ENCODE measurements at regions of chr1 and their contacts with region 1.

Region 1: DNA sequence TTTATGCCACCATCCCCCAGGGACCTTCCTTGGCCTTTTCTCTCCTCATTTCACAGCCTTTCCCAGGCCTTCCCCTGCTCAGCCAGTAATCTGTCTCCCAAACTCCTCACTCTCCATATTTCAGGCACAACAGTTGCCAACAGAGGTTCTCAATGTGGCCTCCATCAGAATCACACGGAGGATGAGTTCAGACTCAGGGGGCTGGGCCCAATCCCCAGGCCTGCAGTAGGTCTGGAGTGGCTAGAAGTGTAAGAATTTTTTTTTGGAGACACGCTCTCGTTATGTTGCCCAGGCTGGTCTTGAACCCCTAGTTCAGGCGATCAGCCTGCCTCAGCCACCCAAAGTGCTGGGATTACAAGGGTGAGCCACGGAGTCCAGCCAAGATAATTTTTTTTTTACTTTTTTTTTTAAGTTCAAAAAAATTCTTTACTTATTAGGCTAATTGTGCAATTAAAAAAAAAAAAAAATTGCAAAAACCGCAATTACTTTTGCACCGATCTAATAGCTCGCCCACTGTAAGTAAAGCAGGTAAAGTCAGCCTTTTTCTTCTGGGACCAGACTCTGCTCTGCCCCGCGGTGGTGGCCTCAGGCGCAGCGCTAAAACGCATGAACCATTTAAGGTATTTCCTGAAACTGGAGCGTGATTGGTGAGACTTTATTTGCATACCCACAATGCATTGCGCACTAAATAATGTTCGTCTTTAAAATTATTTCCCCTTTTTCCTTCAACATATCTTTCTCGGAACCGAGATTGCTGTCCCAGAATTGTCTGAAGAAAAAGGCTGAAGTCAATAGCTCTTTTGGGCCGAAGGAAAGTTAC is 18.7 kb downstream of the KIAA2013 start:
- DNase-seq: peak; percentile 84 to 96 (median 94)
- H3K4me3 ChIP-seq: peak overlapping the region; percentile 76
- H3K4me3 Mint-ChIP-seq: peak overlapping the region; percentile 89 to 100 (median 95)
- H3K27ac ChIP-seq: peak overlapping the region; percentile 100
- H3K27ac Mint-ChIP-seq: peak overlapping the region; percentile 99 to 100 (median 100)
- H3K4me1 ChIP-seq: peaks cover 23% of the 10 kb centered on the region
- H3K4me1 Mint-ChIP-seq: peaks cover 31 to 44% (median 40%) of the 10 kb centered on the region in 3 donors
- H3K27me3 ChIP-seq: no peaks in the 10 kb centered on the region
- H3K27me3 Mint-ChIP-seq: peaks cover 0 to 8% of the 10 kb centered on the region in 2 donors

Region 2: DNA sequence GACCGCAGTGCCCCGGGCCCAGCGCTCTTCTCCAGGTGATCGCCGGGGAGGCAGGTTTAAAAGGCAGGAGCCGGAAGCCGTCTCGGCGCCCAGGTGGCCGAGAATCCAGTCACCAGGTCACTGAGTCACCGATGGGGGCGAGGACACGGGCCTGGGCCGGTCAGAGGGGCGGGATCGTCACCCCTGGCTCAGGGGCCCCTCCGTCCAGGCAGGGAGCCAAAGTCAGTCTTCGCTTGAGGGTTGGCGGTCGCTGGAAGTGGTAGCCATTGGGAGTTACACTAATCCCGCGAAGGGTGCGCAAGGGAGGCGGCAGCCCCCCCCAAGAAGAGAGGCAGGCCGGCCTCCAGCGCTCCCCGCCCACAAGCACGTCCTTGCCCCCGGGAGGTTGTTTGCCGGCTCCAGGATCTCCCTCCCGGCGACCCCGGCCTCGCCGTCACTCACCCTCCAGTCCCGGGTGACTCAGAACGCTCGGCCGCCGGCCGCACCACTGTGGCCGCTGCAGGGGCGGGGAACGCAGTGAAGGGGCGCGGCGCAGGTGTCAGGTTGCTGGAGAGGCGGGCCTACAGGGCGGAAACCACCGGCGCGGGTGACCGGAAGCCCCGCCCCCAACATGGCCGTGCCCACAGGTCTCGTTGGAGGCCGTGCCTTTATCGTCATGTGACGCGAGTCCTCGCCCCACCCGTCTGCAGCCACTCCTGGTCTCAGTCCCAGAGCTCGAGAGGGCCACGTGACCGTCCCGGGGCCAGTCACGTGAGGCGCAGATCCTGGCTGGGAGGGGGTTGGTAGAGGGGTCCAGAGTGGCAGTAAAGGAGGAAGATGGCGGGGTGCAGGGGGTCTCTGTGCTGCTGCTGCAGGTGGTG is 101.8 kb before region 1 on chr1 and contains the starts of genes CLCN6 and MTHFR:
- CTCF ChIA-PET with region 1: interaction called, 6 read pairs
- POLR2A ChIA-PET with region 1: interaction called, 15 read pairs
- DNase-seq: peak; percentile 97 to 99 (median 98)
- H3K4me3 ChIP-seq: peak within 1 kb of the TSS; percentile 90
- H3K4me3 Mint-ChIP-seq: peak within 1 kb of the TSS; percentile 94 to 100 (median 99)
- H3K27ac ChIP-seq: peak within 1 kb of the TSS; percentile 95
- H3K27ac Mint-ChIP-seq: peak within 1 kb of the TSS; percentile 90 to 100 (median 98)
- H3K4me1 ChIP-seq: peaks cover 52% of the 10 kb centered on the region
- H3K4me1 Mint-ChIP-seq: peaks cover 55 to 74% (median 67%) of the 10 kb centered on the region in 3 donors
- H3K27me3 ChIP-seq: no peaks in the 10 kb centered on the region
- H3K27me3 Mint-ChIP-seq: no peaks in the 10 kb centered on the region
- total RNA-seq, gene CLCN6: 8.9 to 9.3 TPM
- total RNA-seq, gene MTHFR: 13.5 to 16.3 TPM

Region 3: DNA sequence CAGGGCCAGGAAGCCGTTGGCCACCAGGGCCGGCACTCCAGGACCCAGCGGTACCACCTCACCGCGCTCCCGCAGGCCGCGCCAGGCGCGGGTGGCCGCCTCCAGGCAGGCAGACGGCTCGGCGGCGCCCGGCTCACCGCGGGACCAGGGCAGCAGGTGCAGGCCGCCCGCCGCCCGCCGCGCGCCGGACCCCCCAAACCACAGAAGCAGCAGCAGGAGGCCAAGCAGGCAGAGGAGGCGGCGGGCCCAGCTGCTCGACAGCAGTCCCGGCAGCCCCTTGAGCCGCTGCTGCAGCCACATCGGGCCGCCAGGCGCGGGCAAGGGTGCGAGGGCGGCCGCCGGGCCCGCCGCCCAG is 18.4 kb after region 1 on chr1:
- CTCF ChIA-PET with region 1: interaction called, 6 read pairs
- POLR2A ChIA-PET with region 1: interaction called, 28 read pairs
- DNase-seq: peak in 3 of 5 donors; percentile 9 to 15 (median 13)
- H3K4me3 ChIP-seq: no peak overlapping the region
- H3K4me3 Mint-ChIP-seq: peak overlapping the region in 2 of 7 donors; percentile 87 to 96
- H3K27ac ChIP-seq: no peak overlapping the region
- H3K27ac Mint-ChIP-seq: peak overlapping the region in 1 of 8 donors; percentile 92
- H3K4me1 ChIP-seq: peaks cover 18% of the 10 kb centered on the region
- H3K4me1 Mint-ChIP-seq: peaks cover 28 to 39% (median 34%) of the 10 kb centered on the region in 3 donors
- H3K27me3 ChIP-seq: no peaks in the 10 kb centered on the region
- H3K27me3 Mint-ChIP-seq: peaks cover 0 to 2% of the 10 kb centered on the region in 2 donors

Region 4: DNA sequence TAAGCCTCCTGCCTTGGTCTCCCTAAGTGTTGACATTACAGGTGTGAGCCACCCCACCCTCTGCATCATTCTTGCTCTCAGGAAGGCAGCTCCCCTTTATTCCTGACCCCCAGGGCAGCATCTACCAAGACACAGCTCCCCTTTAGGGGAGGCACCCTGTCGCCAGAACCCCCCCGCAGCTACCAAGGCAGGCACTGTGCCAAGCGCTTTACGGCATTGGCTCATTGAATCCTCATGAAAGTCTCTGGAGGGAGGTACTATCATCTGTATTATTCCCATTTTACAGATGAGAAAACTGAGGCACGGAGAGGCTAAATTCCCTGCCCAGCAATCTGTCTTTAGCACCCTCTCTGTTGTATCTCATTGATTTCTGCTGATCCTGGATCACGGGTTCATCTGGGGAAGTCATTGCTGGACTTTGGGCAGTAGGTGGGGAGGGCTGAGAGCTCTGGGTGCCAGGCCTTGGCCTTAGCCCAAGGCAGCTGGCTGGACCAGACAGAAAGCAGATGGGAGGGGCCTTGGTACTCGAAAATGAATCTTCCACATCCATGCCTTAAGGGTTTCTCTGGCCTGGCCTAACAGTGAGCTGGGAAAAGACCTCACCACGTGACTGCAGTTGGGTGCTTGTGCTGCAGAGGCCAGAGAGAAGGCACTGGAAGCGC is 32.9 kb after region 1 on chr1:
- CTCF ChIA-PET with region 1: no interaction called
- POLR2A ChIA-PET with region 1: no interaction called
- DNase-seq: no peak
- H3K4me3 ChIP-seq: no peak overlapping the region
- H3K4me3 Mint-ChIP-seq: no peak overlapping the region
- H3K27ac ChIP-seq: no peak overlapping the region
- H3K27ac Mint-ChIP-seq: no peak overlapping the region
- H3K4me1 ChIP-seq: no peaks in the 10 kb centered on the region
- H3K4me1 Mint-ChIP-seq: no peaks in the 10 kb centered on the region
- H3K27me3 ChIP-seq: no peaks in the 10 kb centered on the region
- H3K27me3 Mint-ChIP-seq: no peaks in the 10 kb centered on the region

Region 5: GRCh38 chr1:11979851-11980675 is 72.6 kb after region 1 on chr1 and contains the start of gene MFN2:
- CTCF ChIA-PET with region 1: interaction called, 4 read pairs
- POLR2A ChIA-PET with region 1: interaction called, 40 read pairs
- DNase-seq: peak; percentile 87 to 95 (median 93)
- H3K4me3 ChIP-seq: peak within 1 kb of the TSS; percentile 89
- H3K4me3 Mint-ChIP-seq: peak within 1 kb of the TSS; percentile 88 to 97 (median 94)
- H3K27ac ChIP-seq: peak within 1 kb of the TSS; percentile 92
- H3K27ac Mint-ChIP-seq: peak within 1 kb of the TSS; percentile 92 to 98 (median 96)
- H3K4me1 ChIP-seq: peaks cover 33% of the 10 kb centered on the region
- H3K4me1 Mint-ChIP-seq: peaks cover 35 to 55% (median 47%) of the 10 kb centered on the region in 3 donors
- H3K27me3 ChIP-seq: no peaks in the 10 kb centered on the region
- H3K27me3 Mint-ChIP-seq: no peaks in the 10 kb centered on the region
- total RNA-seq, gene MFN2: 97.1 to 97.2 TPM

Region 6: DNA sequence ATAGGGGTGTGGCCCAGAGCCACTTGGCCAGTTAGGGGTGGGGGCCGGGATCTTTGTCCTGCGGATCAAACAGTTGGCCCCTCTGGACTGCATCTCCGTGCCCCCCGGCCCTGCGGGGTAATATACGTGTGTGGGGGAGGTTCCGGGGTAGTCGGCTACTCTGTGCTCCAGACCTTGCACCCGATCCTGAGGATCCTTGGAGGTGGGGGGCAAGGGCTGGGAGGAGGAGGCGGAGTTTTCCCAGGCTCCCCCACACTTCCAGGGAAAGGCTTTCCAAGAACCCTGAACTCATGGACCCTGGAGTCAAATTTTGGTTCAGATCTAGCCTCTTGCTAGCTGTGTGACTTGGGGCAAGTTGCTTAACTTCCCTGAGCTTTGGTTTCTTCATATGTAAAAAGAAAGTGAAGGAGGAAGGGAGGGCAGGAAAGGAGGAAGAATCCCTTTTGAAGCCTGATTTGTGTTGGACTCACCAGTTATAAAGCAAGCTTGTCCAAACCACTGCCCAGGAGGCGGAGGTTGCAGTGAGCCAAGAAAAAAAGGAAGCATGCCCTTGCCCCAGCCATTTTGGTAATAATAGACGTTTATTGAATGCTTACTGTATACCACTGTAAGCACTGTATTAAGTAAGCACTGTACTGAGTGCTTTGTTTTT is 112.5 kb after region 1 on chr1:
- CTCF ChIA-PET with region 1: no interaction called
- POLR2A ChIA-PET with region 1: interaction called, 12 read pairs
- DNase-seq: peak in 2 of 5 donors; percentile 5 to 7
- H3K4me3 ChIP-seq: peak overlapping the region; percentile 72
- H3K4me3 Mint-ChIP-seq: peak overlapping the region; percentile 79 to 96 (median 90)
- H3K27ac ChIP-seq: peak overlapping the region; percentile 58
- H3K27ac Mint-ChIP-seq: peak overlapping the region; percentile 10 to 91 (median 51)
- H3K4me1 ChIP-seq: peaks cover 7% of the 10 kb centered on the region
- H3K4me1 Mint-ChIP-seq: peaks cover 8 to 25% (median 12%) of the 10 kb centered on the region in 3 donors
- H3K27me3 ChIP-seq: no peaks in the 10 kb centered on the region
- H3K27me3 Mint-ChIP-seq: no peaks in the 10 kb centered on the region

Region 7: DNA sequence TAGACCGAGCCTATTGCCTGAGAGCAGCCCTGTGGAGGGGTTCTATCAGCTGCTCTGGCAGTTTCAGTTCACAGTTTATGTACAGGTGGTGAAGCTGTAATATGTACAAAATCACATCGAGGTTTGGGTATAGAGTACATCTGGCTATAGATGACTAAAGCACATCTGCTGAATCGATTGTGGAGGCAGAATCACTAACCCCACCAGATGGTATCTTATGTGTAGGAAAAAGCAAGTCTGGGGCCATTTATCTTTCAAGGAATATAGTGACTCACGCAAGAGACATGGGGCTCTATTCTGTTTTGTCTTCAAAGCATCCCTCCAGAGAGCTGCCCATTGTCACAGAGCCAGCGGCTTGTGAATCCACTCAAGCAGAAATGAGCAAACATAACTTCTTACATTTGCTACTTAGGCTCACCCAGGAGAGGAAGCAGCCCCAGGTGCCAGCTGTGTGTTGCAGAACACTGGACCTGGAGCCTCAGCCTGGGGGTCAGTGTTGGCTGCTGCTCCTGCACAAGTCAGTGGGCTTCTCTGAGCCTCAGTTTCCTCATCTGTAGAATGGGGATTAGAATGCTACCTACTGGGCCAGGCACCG is 133.1 kb after region 1 on chr1:
- CTCF ChIA-PET with region 1: no interaction called
- POLR2A ChIA-PET with region 1: no interaction called
- DNase-seq: no peak
- H3K4me3 ChIP-seq: no peak overlapping the region
- H3K4me3 Mint-ChIP-seq: no peak overlapping the region
- H3K27ac ChIP-seq: no peak overlapping the region
- H3K27ac Mint-ChIP-seq: peak overlapping the region in 1 of 8 donors; percentile 84
- H3K4me1 ChIP-seq: no peaks in the 10 kb centered on the region
- H3K4me1 Mint-ChIP-seq: peaks cover 7 to 15% (median 11%) of the 10 kb centered on the region in 3 donors
- H3K27me3 ChIP-seq: no peaks in the 10 kb centered on the region
- H3K27me3 Mint-ChIP-seq: peaks cover 1 to 6% of the 10 kb centered on the region in 2 donors

Measured in CD8-positive, alpha-beta memory T cell (primary cell).